Activated naive CD4-positive, alpha-beta T cell treated with anti-CD3 and anti-CD28 coated beads for 36 hours (primary cell): ENCODE measurements at regions of chr12 and their contacts with region 1.

Region 1: GRCh38 chr12:25052196-25052913 is 103.5 kb upstream of the BCAT1 start:
- DNase-seq: peak; percentile 62
- H3K4me3 Mint-ChIP-seq: peak overlapping the region; percentile 89
- H3K27ac Mint-ChIP-seq: peak overlapping the region; percentile 99
- H3K4me1 Mint-ChIP-seq: peaks cover 32% of the 10 kb centered on the region
- H3K27me3 Mint-ChIP-seq: no peaks in the 10 kb centered on the region

Region 2: GRCh38 chr12:24705741-24706358 is 346.5 kb before region 1 on chr12:
- CTCF ChIA-PET with region 1: no interaction called
- intact Hi-C with region 1: loop called (anchors 1 kb)
- DNase-seq: peak; percentile 41
- H3K4me3 Mint-ChIP-seq: no peak overlapping the region
- H3K27ac Mint-ChIP-seq: peak overlapping the region; percentile 75
- H3K4me1 Mint-ChIP-seq: peaks cover 17% of the 10 kb centered on the region
- H3K27me3 Mint-ChIP-seq: peaks cover 2% of the 10 kb centered on the region

Region 3: DNA sequence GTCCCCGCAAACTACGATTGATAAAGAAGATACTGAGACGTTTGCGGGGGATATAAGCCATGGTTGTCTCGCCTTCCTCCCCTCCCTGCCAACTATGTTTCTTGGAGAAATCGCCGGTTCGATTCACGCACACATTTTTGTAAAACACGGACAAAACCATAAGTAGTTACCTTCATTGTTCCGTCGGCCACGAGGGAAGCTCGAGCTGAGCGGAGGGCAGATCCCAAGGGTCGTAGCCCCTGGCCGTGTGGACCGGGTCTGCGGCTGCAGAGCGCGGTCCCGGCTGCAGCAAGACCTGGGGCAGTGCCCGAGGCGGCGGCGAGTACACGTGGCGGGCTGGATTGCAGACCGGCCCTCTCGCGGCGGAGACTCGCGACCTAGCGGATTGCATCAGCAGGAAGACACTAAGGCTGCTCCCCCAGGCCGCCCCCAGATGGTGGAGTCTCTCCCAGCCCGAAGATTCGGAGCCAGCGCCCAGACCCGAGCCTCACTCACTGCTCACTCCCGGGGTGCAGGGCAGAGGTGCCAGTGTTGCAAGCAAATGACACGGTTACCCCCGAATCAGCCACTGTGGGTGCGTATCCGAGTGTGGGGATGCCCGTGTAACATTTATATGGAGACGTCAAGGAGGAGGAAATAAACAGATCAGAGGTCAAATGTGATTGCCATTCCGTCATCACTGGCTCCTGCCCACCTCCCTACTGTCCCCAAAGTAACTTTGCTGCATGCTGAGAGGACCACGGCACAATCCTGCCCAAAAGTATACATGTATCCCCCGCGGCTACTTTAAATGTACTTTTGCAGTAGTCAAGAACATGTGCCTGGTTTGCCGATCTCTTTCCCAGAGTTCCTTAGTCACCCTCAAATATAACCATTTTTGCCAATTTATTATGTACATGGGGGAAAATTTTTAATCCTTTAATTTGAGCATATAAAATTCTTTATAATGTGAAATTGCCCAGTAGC is 103.3 kb before region 1 on chr12 and contains the start of gene BCAT1:
- CTCF ChIA-PET with region 1: no interaction called
- intact Hi-C with region 1: loop called (anchors 1 kb)
- DNase-seq: peak; percentile 35
- H3K4me3 Mint-ChIP-seq: peak within 1 kb of the TSS; percentile 81
- H3K27ac Mint-ChIP-seq: peak within 1 kb of the TSS; percentile 81
- H3K4me1 Mint-ChIP-seq: peaks cover 59% of the 10 kb centered on the region
- H3K27me3 Mint-ChIP-seq: peaks cover 62% of the 10 kb centered on the region
- total RNA-seq, gene BCAT1: 16.4 to 16.7 TPM

Region 4: DNA sequence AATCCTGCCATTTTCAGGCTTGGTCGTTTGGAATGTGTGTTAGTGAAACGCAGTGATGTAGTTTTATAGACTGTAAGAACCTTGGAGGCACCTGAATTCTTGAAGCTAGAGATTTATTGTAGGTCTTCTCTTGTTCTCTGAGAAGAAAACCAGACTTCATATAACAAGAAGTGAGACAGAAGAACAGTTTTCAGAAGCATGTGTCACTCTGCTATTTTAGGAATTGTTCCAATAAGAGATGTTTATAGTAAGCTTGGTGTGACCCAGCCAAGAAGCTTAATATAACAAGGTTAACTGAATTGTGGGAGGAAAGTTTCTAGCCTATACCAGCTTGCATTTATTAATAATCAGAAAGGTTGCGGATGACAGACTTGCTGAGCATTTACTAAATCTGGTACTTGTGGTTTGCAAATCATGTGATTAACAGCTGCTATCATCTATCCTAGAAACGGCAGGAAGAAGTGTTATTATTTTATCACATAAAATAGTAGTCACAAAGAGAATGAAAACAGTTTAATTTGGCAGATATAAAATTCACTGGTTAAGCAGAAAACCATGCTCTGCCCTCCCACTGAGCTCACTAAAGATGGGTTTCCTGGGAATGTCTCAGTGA is 54.3 kb before region 1 on chr12:
- CTCF ChIA-PET with region 1: interaction called, 11 read pairs
- intact Hi-C with region 1: loop called (anchors 1 kb)
- DNase-seq: peak; percentile 20
- H3K4me3 Mint-ChIP-seq: no peak overlapping the region
- H3K27ac Mint-ChIP-seq: peak overlapping the region; percentile 75
- H3K4me1 Mint-ChIP-seq: peaks cover 36% of the 10 kb centered on the region
- H3K27me3 Mint-ChIP-seq: no peaks in the 10 kb centered on the region

Region 5: DNA sequence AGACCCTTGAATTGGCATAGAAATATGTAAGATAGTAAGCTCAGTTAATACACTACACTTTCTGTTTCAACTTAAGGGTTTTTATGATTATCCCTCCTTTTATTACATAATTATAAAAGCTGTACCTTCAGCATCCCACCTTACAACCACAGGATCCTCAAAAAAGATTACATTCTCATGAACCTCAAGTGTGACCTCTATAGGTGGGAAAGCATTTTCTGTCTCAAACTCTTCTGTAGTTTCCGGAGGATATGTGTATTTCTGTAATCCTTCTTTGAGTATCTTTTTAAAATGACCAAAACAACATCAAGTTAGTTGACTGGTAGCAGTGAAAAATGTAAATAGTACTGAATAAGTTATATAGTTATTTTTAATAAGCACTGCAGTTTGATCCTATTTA is 66.7 kb after region 1 on chr12:
- CTCF ChIA-PET with region 1: no interaction called
- intact Hi-C with region 1: loop called (anchors 2 kb)
- DNase-seq: no peak
- H3K4me3 Mint-ChIP-seq: no peak overlapping the region
- H3K27ac Mint-ChIP-seq: no peak overlapping the region
- H3K4me1 Mint-ChIP-seq: peaks cover 6% of the 10 kb centered on the region
- H3K27me3 Mint-ChIP-seq: peaks cover 3% of the 10 kb centered on the region

Region 6: GRCh38 chr12:25250744-25251730 is 198.7 kb after region 1 on chr12 and contains the start of gene KRAS:
- CTCF ChIA-PET with region 1: no interaction called
- intact Hi-C with region 1: loop called (anchors 2 kb)
- DNase-seq: peak; percentile 94
- H3K4me3 Mint-ChIP-seq: peak within 1 kb of the TSS; percentile 93
- H3K27ac Mint-ChIP-seq: peak within 1 kb of the TSS; percentile 88
- H3K4me1 Mint-ChIP-seq: peaks cover 43% of the 10 kb centered on the region
- H3K27me3 Mint-ChIP-seq: no peaks in the 10 kb centered on the region
- total RNA-seq, gene KRAS: 18.9 to 20.6 TPM

Region 7: GRCh38 chr12:25377469-25378177 is 325.3 kb after region 1 on chr12:
- CTCF ChIA-PET with region 1: no interaction called
- intact Hi-C with region 1: loop called (anchors 2 kb)
- DNase-seq: peak; percentile 75
- H3K4me3 Mint-ChIP-seq: peak overlapping the region; percentile 8
- H3K27ac Mint-ChIP-seq: peak overlapping the region; percentile 54
- H3K4me1 Mint-ChIP-seq: peaks cover 54% of the 10 kb centered on the region
- H3K27me3 Mint-ChIP-seq: no peaks in the 10 kb centered on the region